Head of caudate nucleus (tissue), 42 donors: ENCODE measurements at regions of chr10 and their contacts with region 1.

Region 1: DNA sequence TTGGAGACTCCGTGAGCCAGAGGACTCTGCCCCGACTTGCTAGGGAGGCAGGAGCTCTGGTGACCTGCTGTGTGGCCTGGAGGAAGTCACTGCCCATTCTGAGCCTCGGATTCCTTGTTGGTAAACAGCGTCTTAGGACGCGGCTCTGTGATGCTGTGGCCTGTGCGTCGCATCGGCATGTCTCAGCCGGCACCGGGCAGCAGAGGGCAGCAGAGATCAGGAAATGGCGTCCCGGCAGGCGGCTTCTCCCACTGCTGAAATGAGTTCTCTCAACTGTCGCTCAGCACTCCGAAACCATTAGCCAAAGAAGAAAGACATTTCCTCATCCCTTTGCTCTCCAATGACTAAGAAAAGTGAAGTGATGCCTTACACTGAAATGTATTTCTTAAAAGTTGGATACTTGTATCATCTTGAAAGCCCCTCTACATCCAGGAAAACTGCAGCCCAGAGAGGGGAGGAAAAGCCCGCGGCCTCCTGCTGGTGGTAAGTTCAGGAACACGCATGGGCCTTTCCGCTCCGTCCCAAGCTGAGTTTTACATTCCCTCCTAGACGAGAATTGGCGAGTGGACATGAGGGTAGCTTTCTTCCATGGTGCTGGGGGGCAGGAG is 91.7 kb downstream of the WDR11 start:
- DNase-seq: peak; percentile 71 to 96 (median 91)

Region 2: GRCh38 chr10:121216721-121217181 is 273.8 kb after region 1 on chr10:
- intact Hi-C with region 1: no loop called
- DNase-seq: peak; percentile 33 to 92 (median 79)

Region 3: DNA sequence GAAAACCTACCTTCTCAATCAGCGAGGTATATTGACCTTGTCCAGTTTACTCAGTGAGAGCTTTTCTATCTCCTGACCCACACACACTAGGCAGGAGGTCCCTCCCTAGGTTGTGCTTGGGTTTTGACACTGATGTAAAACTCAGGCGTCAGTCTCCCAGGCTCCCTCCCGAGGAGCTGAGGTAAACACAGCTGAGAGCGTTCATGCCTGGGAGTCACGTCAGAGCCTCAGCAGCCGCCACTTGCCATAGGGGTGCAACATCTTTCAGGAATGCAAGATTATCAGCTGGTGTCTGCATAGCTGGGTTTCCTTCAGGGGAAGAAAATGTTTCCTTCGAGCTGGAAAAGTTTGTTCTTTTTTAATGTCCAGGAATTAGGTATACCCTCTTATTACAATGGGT is 584.8 kb after region 1 on chr10:
- intact Hi-C with region 1: loop called (anchors 10 kb)
- DNase-seq: peak in 3 of 42 donors; percentile 28 to 60 (median 42)

Region 4: GRCh38 chr10:121900443-121901174 is 957.7 kb after region 1 on chr10:
- intact Hi-C with region 1: loop called (anchors 5 kb)
- DNase-seq: peak in 7 of 42 donors; percentile 28 to 69 (median 41)